Activated CD4-positive, alpha-beta memory T cell treated with anti-CD3 and anti-CD28 coated beads for 36 hours (primary cell): ENCODE measurements at regions of chr9 and their contacts with region 1.

Region 1: DNA sequence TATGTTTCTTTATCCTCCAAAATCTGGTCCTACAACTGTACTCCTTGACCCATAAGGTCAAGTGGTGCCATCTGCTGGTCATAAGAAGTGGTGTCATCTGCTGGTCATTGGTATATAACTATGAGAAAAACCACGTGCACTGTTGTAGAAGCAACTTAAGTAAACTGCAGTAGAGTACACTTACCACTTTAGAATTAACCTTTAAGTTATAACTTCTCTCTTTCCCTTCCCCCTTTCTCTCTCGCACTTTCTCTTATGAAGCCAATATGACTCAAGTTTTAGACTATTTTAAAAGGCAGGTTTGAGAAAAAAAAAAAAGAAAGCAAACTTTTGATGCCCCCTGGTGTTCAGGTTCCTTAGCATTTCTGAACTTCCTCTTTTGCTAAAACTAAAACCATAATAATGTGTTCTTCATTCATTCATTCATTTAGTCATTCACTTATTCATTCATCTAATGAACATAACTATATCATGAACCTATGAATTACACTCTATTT is 12.8 kb upstream of the MTAP start:
- DNase-seq: peak; percentile 59
- H3K4me3 Mint-ChIP-seq: peak overlapping the region; percentile 40
- H3K27ac Mint-ChIP-seq: no peak overlapping the region
- H3K4me1 Mint-ChIP-seq: no peaks in the 10 kb centered on the region
- H3K27me3 Mint-ChIP-seq: peaks cover 8% of the 10 kb centered on the region

Region 2: GRCh38 chr9:21239911-21240310 is 549.7 kb before region 1 on chr9 and contains the start of gene IFNA14:
- CTCF ChIA-PET with region 1: interaction called, 8 read pairs
- POLR2A ChIA-PET with region 1: no interaction called
- intact Hi-C with region 1: loop called (anchors 1 kb)
- DNase-seq: no peak
- H3K4me3 Mint-ChIP-seq: no peak within 1 kb of the TSS
- H3K27ac Mint-ChIP-seq: no peak within 1 kb of the TSS
- H3K4me1 Mint-ChIP-seq: peaks cover 9% of the 10 kb centered on the region
- H3K27me3 Mint-ChIP-seq: peaks cover 11% of the 10 kb centered on the region
- total RNA-seq, gene IFNA14: not detected

Region 3: GRCh38 chr9:21434202-21435014 is 355.2 kb before region 1 on chr9:
- CTCF ChIA-PET with region 1: interaction called, 11 read pairs
- POLR2A ChIA-PET with region 1: no interaction called
- intact Hi-C with region 1: loop called (anchors 1 kb)
- DNase-seq: peak; percentile 35
- H3K4me3 Mint-ChIP-seq: no peak overlapping the region
- H3K27ac Mint-ChIP-seq: no peak overlapping the region
- H3K4me1 Mint-ChIP-seq: no peaks in the 10 kb centered on the region
- H3K27me3 Mint-ChIP-seq: peaks cover 13% of the 10 kb centered on the region

Region 4: DNA sequence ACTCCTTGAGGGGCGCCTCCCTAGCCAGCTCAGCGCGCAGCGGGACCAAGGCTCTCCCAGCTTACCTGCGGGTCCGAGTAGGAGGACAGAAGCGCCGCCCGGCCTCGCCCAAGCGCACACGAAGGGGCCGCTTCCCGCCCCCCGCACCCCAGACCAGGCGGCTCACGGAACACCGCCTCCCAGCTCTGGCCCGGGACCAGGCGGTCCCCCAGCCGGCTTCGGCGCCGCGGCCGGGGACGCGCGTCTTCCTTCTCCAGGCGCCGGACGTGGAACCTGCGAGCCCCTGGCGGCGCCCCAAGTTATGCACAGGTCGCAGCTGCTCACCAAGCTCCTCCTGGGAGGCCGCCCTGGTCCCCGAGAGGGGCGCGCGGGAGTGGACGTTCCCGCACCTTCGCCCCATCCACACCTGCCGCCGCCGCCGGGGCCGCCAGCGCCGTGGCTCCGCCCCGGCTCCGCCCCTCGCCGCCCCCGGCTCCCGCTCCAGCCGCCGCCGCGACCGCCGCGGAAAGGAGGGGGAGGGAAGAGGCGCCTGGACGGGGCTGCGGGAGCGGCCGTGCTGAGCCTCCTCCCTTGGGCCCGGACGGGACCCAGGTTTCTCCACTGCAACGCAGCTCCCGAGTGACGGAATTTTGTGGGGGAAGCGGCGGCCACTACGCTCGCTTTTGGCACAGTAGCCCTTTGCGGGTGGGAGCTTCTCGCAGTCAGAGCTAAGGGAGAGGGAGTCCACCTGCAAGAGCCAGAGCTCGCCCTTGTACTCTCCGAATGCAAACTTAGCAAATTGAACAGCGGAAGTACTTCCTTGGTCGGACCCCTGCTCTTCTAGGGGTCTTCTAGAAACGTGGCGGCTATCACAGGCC is 229.9 kb before region 1 on chr9:
- CTCF ChIA-PET with region 1: interaction called, 5 read pairs
- POLR2A ChIA-PET with region 1: no interaction called
- intact Hi-C with region 1: loop called (anchors 5 kb)
- DNase-seq: peak; percentile 54
- H3K4me3 Mint-ChIP-seq: peak overlapping the region; percentile 85
- H3K27ac Mint-ChIP-seq: no peak overlapping the region
- H3K4me1 Mint-ChIP-seq: peaks cover 27% of the 10 kb centered on the region
- H3K27me3 Mint-ChIP-seq: peaks cover 37% of the 10 kb centered on the region

Region 5: DNA sequence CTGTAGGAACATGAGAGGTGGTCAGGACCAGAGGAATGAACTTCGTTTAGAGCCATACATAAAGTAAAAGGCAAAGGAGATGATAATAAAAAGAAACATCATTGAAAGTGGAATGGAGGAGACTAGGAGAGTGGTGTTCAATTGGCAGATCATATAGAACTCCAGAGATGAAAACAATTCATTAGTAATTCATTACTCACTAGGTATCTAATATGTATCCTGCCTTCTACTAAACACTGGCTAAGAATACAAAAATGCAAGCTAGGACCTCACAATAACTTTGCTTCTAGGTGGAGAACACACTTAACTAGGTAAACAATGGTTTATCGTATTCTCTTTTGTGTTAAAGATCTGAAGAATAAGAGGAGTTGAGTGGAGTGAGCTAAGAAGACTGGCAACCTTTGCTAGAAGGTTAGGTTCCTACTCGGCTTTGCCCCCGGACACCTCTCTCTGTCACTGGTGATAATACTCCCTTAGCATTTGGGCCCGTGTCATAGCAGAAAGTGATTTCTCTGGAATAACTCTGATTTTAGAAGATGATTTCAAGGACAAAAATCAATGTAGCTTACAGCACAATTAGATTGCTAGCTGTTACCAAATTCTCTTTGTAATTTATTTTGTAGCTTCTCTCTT is 218.8 kb before region 1 on chr9:
- CTCF ChIA-PET with region 1: no interaction called
- POLR2A ChIA-PET with region 1: no interaction called
- intact Hi-C with region 1: no loop called
- DNase-seq: no peak
- H3K4me3 Mint-ChIP-seq: no peak overlapping the region
- H3K27ac Mint-ChIP-seq: no peak overlapping the region
- H3K4me1 Mint-ChIP-seq: no peaks in the 10 kb centered on the region
- H3K27me3 Mint-ChIP-seq: peaks cover 9% of the 10 kb centered on the region

Region 6: DNA sequence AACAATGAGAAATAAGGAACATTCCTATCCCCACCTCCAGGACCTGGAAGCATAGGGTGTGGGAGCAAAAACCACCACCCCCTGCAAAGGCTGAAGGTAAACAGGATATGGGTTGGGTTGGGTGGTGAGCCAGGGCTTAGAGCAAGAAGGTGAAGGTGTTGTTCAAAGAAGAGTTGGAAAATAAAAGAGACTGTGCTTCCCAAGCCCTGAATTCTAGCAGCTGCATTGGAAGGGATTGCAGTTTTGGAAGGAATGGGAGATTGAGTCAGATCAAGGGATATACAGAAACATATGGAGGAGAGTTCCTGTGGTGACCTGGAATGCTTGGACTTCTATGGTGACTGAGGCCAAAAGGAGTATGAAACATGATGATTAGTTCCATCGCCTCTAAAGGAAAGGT is 11.9 kb before region 1 on chr9:
- CTCF ChIA-PET with region 1: interaction called, 11 read pairs
- POLR2A ChIA-PET with region 1: no interaction called
- intact Hi-C with region 1: no loop called
- DNase-seq: no peak
- H3K4me3 Mint-ChIP-seq: no peak overlapping the region
- H3K27ac Mint-ChIP-seq: no peak overlapping the region
- H3K4me1 Mint-ChIP-seq: peaks cover 3% of the 10 kb centered on the region
- H3K27me3 Mint-ChIP-seq: no peaks in the 10 kb centered on the region